Esophagus muscularis mucosa (tissue), 4 donors: ENCODE measurements at regions of chr10 and their contacts with region 1.

Region 1: GRCh38 chr10:6382081-6382480 is 179.3 kb downstream of the PFKFB3 start:
- DNase-seq: peak; percentile 89
- H3K4me3 ChIP-seq: peak overlapping the region in 1 of 4 donors; percentile 30
- H3K27ac ChIP-seq: peak overlapping the region; percentile 39 to 68 (median 64)
- H3K4me1 ChIP-seq: peaks cover 14 to 28% (median 24%) of the 10 kb centered on the region in 4 donors
- H3K27me3 ChIP-seq: no peaks in the 10 kb centered on the region
- CTCF ChIP-seq: no peak
- EP300 ChIP-seq: no peak
- POLR2A ChIP-seq: no peak

Region 2: DNA sequence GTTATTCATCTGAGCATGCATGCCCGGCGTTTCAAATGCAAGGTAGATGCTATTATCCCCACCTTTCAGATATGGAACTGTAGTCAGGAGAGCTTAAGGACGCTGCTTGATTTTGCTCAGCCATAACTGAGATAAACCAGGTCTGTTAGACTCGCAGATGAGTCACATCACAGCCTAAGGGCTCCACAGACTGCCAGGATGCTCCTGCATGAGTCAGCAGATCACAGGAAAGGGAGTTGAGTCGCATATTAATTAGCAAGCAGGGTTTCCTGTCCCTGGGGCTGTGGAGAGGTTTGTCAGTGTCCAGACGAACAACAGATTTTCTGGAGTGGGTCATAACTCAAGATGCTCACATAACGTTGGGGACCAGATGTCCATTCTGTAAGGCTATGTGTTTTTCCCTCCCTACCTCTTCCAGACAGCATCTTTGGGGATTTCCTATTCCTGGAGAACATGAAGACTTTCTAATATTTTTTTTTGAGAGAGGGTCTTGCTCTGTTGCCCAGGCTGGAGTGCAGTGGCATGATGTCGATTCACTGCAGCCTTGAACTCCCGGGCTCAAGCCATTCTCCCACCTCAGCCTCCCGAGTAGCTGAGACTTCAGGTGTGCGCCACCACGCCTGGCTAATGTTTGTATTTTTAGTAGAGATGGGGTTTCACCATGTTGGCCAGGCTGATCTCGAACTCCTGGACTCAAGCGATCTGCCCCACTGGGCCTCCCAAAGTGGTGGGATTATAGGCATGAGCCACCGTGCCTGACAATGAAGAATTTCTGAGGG is 142.7 kb before region 1 on chr10:
- intact Hi-C with region 1: loop called (anchors 10 kb)
- DNase-seq: no peak
- H3K4me3 ChIP-seq: no peak overlapping the region
- H3K27ac ChIP-seq: peak overlapping the region in 2 of 4 donors; percentile 39 to 42
- H3K4me1 ChIP-seq: peaks cover 6 to 19% (median 10%) of the 10 kb centered on the region in 4 donors
- H3K27me3 ChIP-seq: no peaks in the 10 kb centered on the region
- CTCF ChIP-seq: no peak
- EP300 ChIP-seq: no peak
- POLR2A ChIP-seq: no peak

Region 3: DNA sequence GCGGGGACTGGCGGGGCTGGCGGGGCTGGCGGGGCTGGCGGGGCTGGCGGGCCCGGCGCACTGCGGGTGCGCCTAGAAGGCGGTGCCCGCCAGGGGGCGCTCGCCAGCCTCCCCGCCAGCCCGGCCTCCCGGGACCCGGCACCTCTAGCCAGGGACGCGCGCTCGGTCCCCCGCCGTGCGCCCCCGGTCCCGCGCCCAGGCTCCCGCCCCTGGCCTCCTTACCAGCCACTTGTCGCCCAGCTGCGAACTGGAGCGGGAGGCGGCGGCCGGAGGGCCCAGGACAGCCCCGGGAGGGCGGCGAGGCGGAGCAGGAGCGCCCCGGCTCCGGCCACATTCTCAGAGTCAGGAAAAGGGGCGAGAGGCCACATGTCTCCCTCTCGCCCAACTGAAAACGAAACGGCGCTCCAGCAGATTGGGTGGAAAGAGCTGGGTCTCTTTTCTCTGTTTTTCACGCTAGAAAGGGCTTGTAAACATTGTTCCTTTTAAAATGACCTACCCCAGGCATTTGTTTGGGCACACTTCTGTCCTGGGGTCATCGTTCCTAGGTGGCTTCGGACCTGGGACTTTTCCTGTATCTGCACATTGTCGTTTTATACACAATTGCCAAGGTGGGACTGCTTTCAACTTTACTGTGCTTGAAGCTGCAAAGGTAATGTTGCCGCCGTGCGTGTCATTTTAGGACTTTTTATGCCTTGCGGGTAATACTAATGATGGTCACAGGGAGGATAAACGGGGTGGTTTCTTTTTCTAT is 198.4 kb after region 1 on chr10:
- intact Hi-C with region 1: no loop called
- DNase-seq: no peak
- H3K4me3 ChIP-seq: peak overlapping the region; percentile 61 to 80 (median 61)
- H3K27ac ChIP-seq: peak overlapping the region in 2 of 4 donors; percentile 53 to 62
- H3K4me1 ChIP-seq: peaks cover 0 to 14% (median 12%) of the 10 kb centered on the region in 4 donors
- H3K27me3 ChIP-seq: peaks cover 0 to 53% (median 9%) of the 10 kb centered on the region in 4 donors
- CTCF ChIP-seq: peak; percentile 50 to 62 (median 50)
- EP300 ChIP-seq: no peak
- POLR2A ChIP-seq: peak; percentile 31